Brain microvascular endothelial cell (primary cell): ENCODE measurements at regions of chr12 and their contacts with region 1.

Region 1: GRCh38 chr12:62581288-62582064 is 114.8 kb downstream of the MON2 start:
- DNase-seq: no peak
- H3K4me3 ChIP-seq: no peak overlapping the region
- H3K27ac ChIP-seq: no peak overlapping the region
- H3K27me3 ChIP-seq: no peaks in the 10 kb centered on the region
- CTCF ChIP-seq: peak; percentile 59

Region 2: DNA sequence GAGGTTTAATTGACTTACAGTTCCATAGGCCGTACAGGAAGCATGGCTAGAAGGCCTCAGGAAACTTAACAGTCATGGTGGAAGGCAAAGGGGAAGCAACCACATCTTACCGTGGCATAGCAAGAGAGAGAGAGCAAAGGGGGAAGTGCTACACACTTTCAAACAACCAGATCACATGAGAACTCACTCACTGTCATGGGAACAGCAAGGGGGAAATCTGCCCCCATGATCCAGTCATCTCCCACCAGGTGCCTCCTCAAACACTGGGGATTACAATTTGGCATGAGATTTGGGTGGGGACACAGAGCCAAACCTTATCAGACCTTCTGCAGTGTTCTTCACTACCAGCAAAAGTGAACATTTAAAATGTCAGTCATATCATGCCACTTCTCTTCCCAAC is 262.4 kb before region 1 on chr12:
- in situ Hi-C with region 1: no loop called
- DNase-seq: no peak
- H3K4me3 ChIP-seq: no peak overlapping the region
- H3K27ac ChIP-seq: no peak overlapping the region
- H3K27me3 ChIP-seq: no peaks in the 10 kb centered on the region
- CTCF ChIP-seq: no peak

Region 3: GRCh38 chr12:62785941-62786559 is 204.6 kb after region 1 on chr12:
- in situ Hi-C with region 1: loop called (anchors 10 kb)
- DNase-seq: peak; percentile 93
- H3K4me3 ChIP-seq: no peak overlapping the region
- H3K27ac ChIP-seq: peak overlapping the region; percentile 90
- H3K27me3 ChIP-seq: no peaks in the 10 kb centered on the region
- CTCF ChIP-seq: no peak

Region 4: DNA sequence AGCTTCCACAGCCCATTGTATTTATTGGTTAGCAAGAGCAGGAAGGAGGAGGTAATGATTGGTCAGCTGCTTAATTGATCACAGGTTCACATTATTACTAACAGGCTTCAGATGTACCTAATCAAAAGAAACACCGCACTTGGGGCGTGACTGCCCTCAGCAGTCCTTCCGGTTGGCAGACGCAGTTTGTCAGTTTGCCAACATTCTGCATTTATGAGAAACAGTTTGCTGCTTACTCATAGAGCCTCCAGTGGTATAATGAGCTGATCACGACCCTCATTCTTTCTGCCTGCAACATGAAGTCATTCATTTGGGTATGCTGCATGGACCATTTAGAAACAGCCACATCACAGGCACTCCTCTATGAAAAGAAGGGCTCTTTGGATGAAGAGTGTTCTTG is 395.9 kb after region 1 on chr12:
- in situ Hi-C with region 1: no loop called
- DNase-seq: peak; percentile 44
- H3K4me3 ChIP-seq: no peak overlapping the region
- H3K27ac ChIP-seq: no peak overlapping the region
- H3K27me3 ChIP-seq: no peaks in the 10 kb centered on the region
- CTCF ChIP-seq: no peak